ENCODE measurements at regions of chr7 and their contacts with region 1.

Region 1: GRCh38 chr7:105149827-105150226 is 135.8 kb downstream of the KMT2E start:
- DNase-seq: no peak
- ATAC-seq: no peak
- H3K4me3 ChIP-seq: no peak overlapping the region
- H3K4me3 Mint-ChIP-seq: no peak overlapping the region
- H3K27ac ChIP-seq: no peak overlapping the region
- H3K27ac Mint-ChIP-seq: no peak overlapping the region
- H3K4me1 ChIP-seq: no peaks in the 10 kb centered on the region
- H3K4me1 Mint-ChIP-seq: peaks cover 4% of the 10 kb centered on the region
- H3K27me3 ChIP-seq: no peaks in the 10 kb centered on the region
- H3K27me3 Mint-ChIP-seq: no peaks in the 10 kb centered on the region
- CTCF ChIP-seq: no peak

Region 2: GRCh38 chr7:105336009-105336408 is 186.2 kb after region 1 on chr7:
- CTCF ChIA-PET with region 1: no interaction called
- POLR2A ChIA-PET with region 1: no interaction called
- intact Hi-C with region 1: loop called (anchors 5 kb)
- DNase-seq: peak in 2 of 14 experiments; percentile 27 to 41
- ATAC-seq: no peak
- H3K4me3 ChIP-seq: no peak overlapping the region
- H3K4me3 Mint-ChIP-seq: no peak overlapping the region
- H3K27ac ChIP-seq: no peak overlapping the region
- H3K27ac Mint-ChIP-seq: no peak overlapping the region
- H3K4me1 ChIP-seq: peaks cover 4% of the 10 kb centered on the region
- H3K4me1 Mint-ChIP-seq: peaks cover 36% of the 10 kb centered on the region
- H3K27me3 ChIP-seq: no peaks in the 10 kb centered on the region
- H3K27me3 Mint-ChIP-seq: no peaks in the 10 kb centered on the region
- CTCF ChIP-seq: peak; percentile 76

Region 3: DNA sequence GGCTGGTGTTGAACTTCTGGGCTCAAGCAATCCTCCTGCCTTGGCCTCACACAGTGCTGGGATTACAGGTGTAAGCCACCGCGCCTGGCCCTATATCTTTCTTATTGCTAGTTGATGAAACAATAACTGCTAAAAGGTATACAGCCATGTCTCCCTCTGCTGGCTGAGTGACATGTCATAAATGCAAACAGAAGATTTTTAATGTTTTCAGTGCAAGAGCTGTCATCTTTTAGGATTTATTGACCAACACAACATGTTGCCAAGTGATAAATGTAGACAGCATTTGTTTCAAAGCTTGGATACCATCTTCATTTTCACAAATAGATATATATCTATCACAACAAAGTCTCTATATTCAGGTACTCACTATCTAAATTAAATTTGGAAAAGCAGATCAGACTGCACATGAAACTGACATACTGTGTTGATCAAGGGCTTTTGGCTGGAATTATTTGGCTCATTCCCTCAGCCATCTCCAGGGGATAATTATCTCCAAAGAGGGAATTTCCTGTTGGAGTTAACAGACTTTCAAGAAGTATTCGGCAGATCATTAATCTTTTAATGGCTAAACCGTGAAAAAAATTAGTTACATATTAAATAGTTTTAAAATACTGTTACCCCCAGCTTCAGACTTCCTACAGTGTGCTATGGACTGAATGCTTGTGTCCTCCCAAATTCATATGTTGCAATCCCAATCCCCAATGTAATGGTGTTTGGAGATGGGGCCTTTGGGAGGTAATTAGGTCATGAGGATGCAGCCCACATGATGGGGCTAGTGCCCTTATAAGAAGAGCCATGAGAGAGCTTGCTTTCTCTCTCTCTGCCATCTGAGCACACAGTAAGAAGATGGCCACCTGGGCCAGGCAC is 280.2 kb after region 1 on chr7:
- CTCF ChIA-PET with region 1: interaction called, 3 read pairs
- POLR2A ChIA-PET with region 1: no interaction called
- intact Hi-C with region 1: loop called (anchors 1 kb)
- DNase-seq: peak; percentile 23 to 78 (median 45)
- ATAC-seq: peak; percentile 76
- H3K4me3 ChIP-seq: no peak overlapping the region
- H3K4me3 Mint-ChIP-seq: no peak overlapping the region
- H3K27ac ChIP-seq: no peak overlapping the region
- H3K27ac Mint-ChIP-seq: no peak overlapping the region
- H3K4me1 ChIP-seq: peaks cover 3% of the 10 kb centered on the region
- H3K4me1 Mint-ChIP-seq: peaks cover 7% of the 10 kb centered on the region
- H3K27me3 ChIP-seq: no peaks in the 10 kb centered on the region
- H3K27me3 Mint-ChIP-seq: no peaks in the 10 kb centered on the region
- CTCF ChIP-seq: peak; percentile 72